ENCODE measurements at regions of chr19 and their contacts with region 1.

Region 1: DNA sequence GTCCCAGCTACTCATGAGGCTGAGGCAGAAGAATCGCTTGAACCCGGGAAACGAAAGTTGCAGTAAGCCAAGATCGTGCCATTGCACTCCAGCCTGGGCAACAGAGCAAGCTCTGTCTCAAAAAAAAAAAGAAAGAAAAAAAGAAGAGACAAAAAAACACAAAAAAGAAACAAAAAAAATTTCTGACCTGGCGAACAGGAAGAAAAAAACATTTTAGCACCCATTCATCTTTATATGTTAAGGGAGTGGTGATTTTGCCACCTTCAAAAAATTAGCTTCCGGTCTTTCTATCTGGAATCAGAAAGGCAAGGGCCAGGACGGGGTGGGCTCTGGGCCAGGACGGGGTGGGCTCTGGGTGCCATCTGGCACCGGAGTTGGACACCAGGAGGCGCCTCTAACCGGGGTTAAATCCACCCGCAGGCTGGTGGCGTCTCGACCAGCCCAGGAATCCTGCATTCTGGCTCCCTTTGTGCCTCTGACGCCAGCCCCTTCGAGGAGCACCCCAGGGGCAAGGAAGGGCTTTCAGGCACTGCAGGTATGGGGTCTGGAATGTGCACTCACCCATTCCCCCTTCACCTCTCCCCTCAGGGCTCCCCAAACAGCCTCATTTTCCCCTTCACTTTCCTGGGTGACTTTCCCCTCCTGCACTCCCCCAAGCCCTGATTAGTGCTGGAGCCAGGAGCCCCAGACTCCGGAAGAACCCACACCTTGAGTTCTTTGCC is 10.4 kb upstream of the ZSWIM4 start:
- DNase-seq: no peak
- CTCF ChIP-seq: peak; percentile 62

Region 2: GRCh38 chr19:13850293-13850909 is 65.5 kb after region 1 on chr19:
- in situ Hi-C with region 1: loop called (anchors 10 kb)
- DNase-seq: peak; percentile 75
- CTCF ChIP-seq: no peak